ENCODE measurements at regions of chr6 and their contacts with region 1.

Region 1: DNA sequence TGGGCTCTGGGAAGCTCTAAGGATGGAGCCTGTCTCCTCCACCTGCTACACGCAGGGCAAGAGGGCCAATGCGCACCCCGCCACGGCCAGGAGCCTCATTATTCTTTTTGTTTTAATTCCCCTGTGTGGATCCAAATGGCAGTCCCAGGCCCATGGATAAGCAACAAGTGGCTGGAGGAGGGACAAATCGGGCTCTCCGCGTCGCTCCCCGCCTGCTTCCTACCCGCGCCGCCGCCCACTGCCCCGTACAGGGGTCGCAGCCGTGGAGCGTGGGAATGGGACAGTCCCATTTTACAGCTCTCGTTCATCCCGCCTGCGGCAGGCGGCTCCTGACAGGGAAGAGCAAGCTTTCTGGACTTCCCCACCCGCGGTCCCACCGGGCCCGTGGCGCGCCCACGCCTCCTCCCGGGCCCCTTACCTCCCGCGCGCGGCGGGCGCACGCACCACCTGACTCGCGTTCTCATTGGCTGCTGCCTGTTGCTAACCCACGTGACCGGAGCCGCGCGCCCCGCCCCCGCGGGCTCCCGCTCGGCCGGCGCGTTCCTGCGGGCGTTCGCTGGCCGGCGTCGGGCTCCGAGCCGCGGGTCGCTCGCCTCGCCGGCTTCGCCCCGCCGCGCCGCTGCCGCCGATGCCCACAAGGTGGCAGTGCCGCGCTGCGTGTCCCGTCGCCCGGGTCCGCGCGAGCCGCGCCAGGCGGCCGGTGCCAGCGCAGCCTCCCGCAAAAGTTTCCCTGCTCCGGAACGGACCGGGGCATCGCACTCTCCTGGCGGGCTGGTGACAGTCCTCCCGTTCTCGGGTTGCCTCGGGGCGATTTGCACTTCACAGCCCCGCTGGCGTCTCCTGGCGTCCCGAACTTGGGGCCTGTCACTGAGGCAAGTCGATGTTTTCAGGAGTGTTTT is 93.3 kb downstream of the CD83 start:
- DNase-seq: peak; percentile 96 to 97 (median 96)
- ATAC-seq: peak; percentile 90 to 97 (median 95)
- H3K4me3 ChIP-seq: peak overlapping the region; percentile 53 to 90 (median 78)
- H3K27ac ChIP-seq: peak overlapping the region; percentile 82 to 95 (median 88)
- H3K4me1 ChIP-seq: peaks cover 0 to 23% (median 15%) of the 10 kb centered on the region in 12 donors
- H3K27me3 ChIP-seq: no peaks in the 10 kb centered on the region
- CTCF ChIP-seq: peak; percentile 28 to 98 (median 72)
- POLR2A ChIP-seq: peak in 1 of 2 donors; percentile 69

Region 2: DNA sequence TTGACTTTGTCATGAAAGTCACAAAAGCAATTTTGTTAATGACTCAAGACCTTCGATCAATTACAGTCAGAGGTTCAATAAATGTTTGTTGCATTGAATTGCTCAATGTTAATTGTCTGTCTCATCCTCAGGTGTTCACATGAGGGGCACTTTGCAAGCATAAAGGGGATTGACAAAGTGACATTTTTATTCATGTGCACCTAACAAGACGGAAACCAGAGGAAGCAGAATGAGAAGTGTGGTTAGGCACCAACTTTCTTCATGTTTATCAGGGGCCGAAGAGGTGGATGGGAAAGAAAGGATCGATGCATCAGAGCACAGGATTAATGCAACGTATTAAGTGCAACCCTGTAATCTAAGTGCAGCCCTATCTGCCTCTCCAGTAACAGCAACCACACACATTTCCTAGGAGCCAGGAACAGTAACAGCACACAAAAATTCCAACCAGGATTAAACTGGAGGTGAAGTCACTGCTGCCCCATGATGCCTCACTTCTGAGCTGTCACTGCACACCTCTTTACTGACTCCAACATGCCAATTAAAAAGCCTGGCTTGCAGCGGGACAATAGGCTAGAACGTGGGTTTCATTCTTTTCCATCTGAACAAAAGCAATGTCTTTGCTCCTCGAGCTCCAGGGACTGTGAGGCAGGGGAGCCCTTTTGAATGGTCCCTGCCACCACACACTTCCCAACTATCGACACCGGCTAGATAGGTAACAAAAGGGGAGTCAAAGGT is 169.3 kb after region 1 on chr6:
- intact Hi-C with region 1: no loop called
- DNase-seq: no peak
- ATAC-seq: peak; percentile 51 to 61 (median 52)
- H3K4me3 ChIP-seq: no peak overlapping the region
- H3K27ac ChIP-seq: no peak overlapping the region
- H3K4me1 ChIP-seq: peaks cover 0 to 11% (median 0%) of the 10 kb centered on the region in 12 donors
- H3K27me3 ChIP-seq: no peaks in the 10 kb centered on the region
- CTCF ChIP-seq: no peak
- POLR2A ChIP-seq: no peak

Region 3: GRCh38 chr6:14584450-14584849 is 373.5 kb after region 1 on chr6:
- intact Hi-C with region 1: loop called in 1 of 10 experiments (anchors 10 kb)
- DNase-seq: no peak
- ATAC-seq: peak in 2 of 4 donors; percentile 36 to 58
- H3K4me3 ChIP-seq: no peak overlapping the region
- H3K27ac ChIP-seq: no peak overlapping the region
- H3K4me1 ChIP-seq: peaks cover 0 to 10% (median 0%) of the 10 kb centered on the region in 12 donors
- H3K27me3 ChIP-seq: no peaks in the 10 kb centered on the region
- CTCF ChIP-seq: peak in 10 of 12 donors; percentile 13 to 40 (median 22)
- POLR2A ChIP-seq: no peak

Region 4: GRCh38 chr6:14721103-14721746 is 510.3 kb after region 1 on chr6:
- intact Hi-C with region 1: loop called in 2 of 10 experiments (anchors 5 to 10 kb)
- DNase-seq: no peak
- ATAC-seq: peak in 3 of 4 donors; percentile 47 to 68 (median 49)
- H3K4me3 ChIP-seq: no peak overlapping the region
- H3K27ac ChIP-seq: peak overlapping the region in 1 of 12 donors; percentile 80
- H3K4me1 ChIP-seq: peaks cover 0 to 56% (median 14%) of the 10 kb centered on the region in 12 donors
- H3K27me3 ChIP-seq: no peaks in the 10 kb centered on the region
- CTCF ChIP-seq: no peak
- POLR2A ChIP-seq: no peak

Region 5: DNA sequence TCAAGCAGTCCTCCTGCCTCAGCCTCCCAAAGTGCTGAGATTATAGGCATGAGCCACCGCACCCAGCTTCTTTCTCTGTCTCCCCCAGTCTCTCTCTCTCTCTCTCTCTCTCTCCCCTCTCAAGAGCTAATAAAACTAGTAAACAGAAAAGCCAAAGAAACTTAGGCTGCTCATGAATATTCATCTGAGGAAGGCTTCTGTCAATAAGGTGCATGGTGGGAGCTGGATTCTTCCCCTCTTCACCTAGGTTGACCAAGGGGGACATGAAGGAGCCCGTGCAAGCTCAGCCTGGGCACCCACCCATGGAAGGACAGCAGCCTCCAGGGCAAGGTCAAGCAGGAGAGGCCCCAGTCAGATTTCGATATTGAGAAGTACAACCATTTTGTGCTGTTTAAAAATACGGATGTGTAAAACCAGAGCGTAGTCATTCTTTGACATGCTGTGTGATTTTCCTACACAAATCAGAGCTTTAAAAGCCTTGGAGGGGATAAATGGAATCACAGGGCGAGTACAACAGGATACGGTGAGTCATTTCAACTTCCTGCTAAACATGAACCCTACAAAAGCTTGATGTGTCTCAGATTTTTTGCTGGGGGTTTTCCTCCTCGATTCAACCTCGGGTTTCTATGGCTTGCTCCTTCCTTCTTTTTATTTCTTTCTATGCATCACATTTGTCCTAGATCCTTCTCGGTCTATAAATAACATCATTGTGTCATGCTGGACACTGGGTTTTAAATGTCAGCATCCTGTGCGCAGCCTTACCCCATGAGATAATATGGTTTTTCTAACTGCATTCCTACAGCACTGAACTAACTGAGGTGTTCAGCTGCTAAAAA is 666.1 kb after region 1 on chr6:
- intact Hi-C with region 1: loop called in 6 of 10 experiments (anchors 5 to 10 kb)
- DNase-seq: peak in 1 of 5 donors; percentile 37
- ATAC-seq: peak; percentile 86 to 94 (median 90)
- H3K4me3 ChIP-seq: no peak overlapping the region
- H3K27ac ChIP-seq: peak overlapping the region; percentile 63 to 91 (median 75)
- H3K4me1 ChIP-seq: peaks cover 4 to 63% (median 34%) of the 10 kb centered on the region in 12 donors
- H3K27me3 ChIP-seq: no peaks in the 10 kb centered on the region
- CTCF ChIP-seq: no peak
- POLR2A ChIP-seq: no peak

Region 6: GRCh38 chr6:15491255-15491985 is 1280.5 kb after region 1 on chr6:
- intact Hi-C with region 1: loop called in 8 of 10 experiments (anchors 5 to 10 kb)
- DNase-seq: peak in 4 of 5 donors; percentile 71 to 81 (median 80)
- ATAC-seq: peak; percentile 43 to 69 (median 62)
- H3K4me3 ChIP-seq: no peak overlapping the region
- H3K27ac ChIP-seq: peak overlapping the region in 7 of 12 donors; percentile 14 to 58 (median 32)
- H3K4me1 ChIP-seq: peaks cover 0 to 47% (median 30%) of the 10 kb centered on the region in 12 donors
- H3K27me3 ChIP-seq: no peaks in the 10 kb centered on the region
- CTCF ChIP-seq: peak; percentile 89 to 98 (median 96)
- POLR2A ChIP-seq: no peak

Measured in heart left ventricle (tissue), 16 donors.